ENCODE measurements at regions of chr13 and their contacts with region 1.

Region 1: DNA sequence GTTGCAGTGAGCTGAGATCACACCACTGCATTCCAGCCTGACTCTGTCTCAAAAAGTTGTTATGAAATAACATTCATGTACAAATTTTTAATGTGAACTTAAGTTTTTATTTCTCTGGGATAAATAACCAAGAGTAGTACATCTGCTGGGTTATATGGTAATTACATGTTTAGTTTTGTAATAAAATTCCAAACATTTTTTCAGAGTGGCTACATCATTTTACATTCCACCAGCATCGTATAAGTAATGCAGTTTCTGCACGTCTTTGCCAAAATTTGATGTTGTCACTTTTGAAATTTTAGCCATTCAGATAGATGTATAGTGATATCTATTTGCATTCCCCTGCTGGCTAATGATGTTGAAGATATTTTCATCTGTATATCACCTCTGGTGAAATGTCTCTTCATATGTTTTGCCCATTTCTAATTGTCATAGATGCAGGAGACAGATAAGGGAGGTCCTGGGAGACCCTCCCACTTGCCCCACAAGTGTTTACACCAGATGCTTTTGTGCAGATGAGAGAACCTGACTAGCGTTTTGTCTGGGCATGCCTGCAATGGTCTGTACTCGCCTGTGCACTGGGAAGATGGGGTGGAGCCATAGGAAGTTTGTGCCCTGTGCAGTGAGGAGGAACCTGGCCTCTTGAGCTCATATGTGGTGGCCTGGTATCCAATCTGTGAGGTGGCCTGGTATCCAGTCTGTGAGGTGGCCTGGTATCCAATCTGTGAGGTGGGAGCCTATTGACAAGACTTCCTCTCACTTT is 12.7 kb upstream of the KBTBD6 start:
- DNase-seq: no peak
- H3K4me3 ChIP-seq: no peak overlapping the region
- CTCF ChIP-seq: no peak

Region 2: GRCh38 chr13:41188584-41188983 is 43.3 kb after region 1 on chr13:
- in situ Hi-C with region 1: loop called (anchors 5 kb)
- DNase-seq: no peak
- H3K4me3 ChIP-seq: no peak overlapping the region
- CTCF ChIP-seq: no peak

Measured in astrocyte of the cerebellum (primary cell).